ENCODE measurements at regions of chr18 and their contacts with region 1.

Region 1: GRCh38 chr18:74353169-74353775 is 37.6 kb downstream of the C18orf63 start:
- DNase-seq: peak; percentile 21
- CTCF ChIP-seq: peak; percentile 62

Region 2: GRCh38 chr18:73807551-73808192 is 545.6 kb before region 1 on chr18:
- in situ Hi-C with region 1: no loop called
- DNase-seq: no peak
- CTCF ChIP-seq: no peak

Region 3: GRCh38 chr18:74495581-74496507 is 142.6 kb after region 1 on chr18 and contains the start of gene CNDP2:
- in situ Hi-C with region 1: loop called (anchors 10 kb)
- DNase-seq: peak; percentile 99
- CTCF ChIP-seq: no peak